ENCODE measurements at regions of chr7 and their contacts with region 1.

Region 1: DNA sequence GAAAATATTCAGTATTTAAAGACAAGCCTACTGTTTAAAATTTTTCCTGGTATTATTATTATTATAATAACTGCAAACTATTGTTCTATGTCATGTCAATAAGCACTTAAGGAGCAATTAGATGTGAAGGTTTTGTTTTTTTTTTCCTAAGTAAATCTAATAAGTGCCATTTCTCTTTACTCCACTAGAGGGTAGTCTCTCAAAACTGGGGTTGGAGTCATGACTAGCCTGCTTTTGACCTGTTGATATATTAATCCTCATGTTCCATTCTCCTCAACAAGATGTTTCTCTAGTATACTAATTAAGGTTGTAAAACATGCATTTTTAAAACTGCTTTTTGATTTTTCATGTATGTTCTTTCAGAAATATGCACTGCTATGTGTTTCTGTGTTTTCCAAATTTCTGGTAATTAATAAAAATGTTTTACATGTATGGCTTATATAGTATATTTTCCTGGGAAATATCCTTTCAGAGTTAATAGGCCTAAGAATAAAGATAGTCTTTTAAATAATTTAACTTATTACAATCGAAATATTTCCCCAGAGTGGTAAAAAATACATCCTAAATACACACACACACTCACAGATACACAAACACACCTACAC is 1.0 kb upstream of the LRRN3 start:
- DNase-seq: no peak
- H3K4me3 Mint-ChIP-seq: no peak overlapping the region
- H3K27ac Mint-ChIP-seq: no peak overlapping the region
- H3K4me1 Mint-ChIP-seq: peaks cover 68% of the 10 kb centered on the region
- H3K27me3 Mint-ChIP-seq: no peaks in the 10 kb centered on the region

Region 2: DNA sequence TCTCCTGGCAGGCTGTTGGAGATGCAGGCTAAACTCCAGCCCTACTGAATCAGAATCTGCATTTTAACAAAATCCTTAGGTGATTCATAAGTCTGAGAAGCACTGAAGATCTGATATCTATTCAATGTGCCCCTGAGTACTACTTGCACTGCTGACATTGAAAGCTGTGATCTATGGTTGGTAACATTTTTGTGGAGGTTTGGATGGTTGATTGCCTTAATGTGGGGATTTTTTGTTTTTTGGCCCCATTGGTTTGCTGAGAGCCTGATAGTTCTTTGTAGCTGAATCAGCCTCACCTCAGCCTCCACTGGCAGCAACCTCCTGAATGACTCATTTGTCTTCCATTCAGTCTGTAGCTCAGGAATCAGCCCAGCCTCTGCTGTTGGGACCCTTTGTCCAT is 13.7 kb before region 1 on chr7:
- CTCF ChIA-PET with region 1: interaction called, 3 read pairs
- intact Hi-C with region 1: loop called (anchors 1 kb)
- DNase-seq: peak; percentile 63
- H3K4me3 Mint-ChIP-seq: no peak overlapping the region
- H3K27ac Mint-ChIP-seq: peak overlapping the region; percentile 20
- H3K4me1 Mint-ChIP-seq: peaks cover 65% of the 10 kb centered on the region
- H3K27me3 Mint-ChIP-seq: no peaks in the 10 kb centered on the region

Region 3: DNA sequence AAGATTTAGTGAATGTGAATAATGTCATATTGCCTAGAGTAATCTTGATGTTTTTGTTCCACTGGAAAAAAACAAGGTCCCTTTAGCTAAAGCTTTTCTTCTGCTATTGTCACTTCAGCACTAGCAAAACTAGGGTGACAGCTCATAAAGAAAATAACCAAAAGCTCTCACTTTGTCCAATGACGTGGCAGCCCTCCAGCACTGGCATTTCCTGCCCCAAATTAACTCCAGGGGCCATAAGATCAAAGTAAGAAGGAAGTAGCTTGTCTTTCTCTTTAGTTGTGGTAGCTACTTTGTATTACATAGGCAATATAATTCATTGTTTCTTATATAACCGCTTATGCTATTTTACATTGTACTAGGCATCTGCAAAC is 48.3 kb after region 1 on chr7:
- CTCF ChIA-PET with region 1: interaction called, 6 read pairs
- intact Hi-C with region 1: loop called (anchors 1 kb)
- DNase-seq: peak; percentile 86
- H3K4me3 Mint-ChIP-seq: peak overlapping the region; percentile 62
- H3K27ac Mint-ChIP-seq: peak overlapping the region; percentile 92
- H3K4me1 Mint-ChIP-seq: peaks cover 32% of the 10 kb centered on the region
- H3K27me3 Mint-ChIP-seq: no peaks in the 10 kb centered on the region

Region 4: DNA sequence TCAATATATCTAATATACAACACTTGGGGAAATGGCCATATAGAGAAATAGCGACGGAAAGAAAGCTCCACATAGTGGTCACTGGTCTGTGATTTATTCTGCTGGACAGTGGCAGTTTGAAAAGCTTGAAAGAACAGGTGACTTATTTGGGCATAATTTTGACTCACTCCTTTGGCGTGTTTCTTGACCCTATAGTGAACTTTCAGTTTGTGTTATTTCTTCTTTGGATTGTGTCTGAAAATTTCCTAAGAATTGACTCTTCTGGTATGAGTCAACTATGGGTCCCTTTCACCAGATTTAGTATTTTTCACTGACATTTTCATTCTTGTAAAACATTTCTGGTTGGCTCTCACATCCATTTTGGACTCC is 498.1 kb after region 1 on chr7:
- CTCF ChIA-PET with region 1: no interaction called
- intact Hi-C with region 1: no loop called
- DNase-seq: no peak
- H3K4me3 Mint-ChIP-seq: no peak overlapping the region
- H3K27ac Mint-ChIP-seq: no peak overlapping the region
- H3K4me1 Mint-ChIP-seq: no peaks in the 10 kb centered on the region
- H3K27me3 Mint-ChIP-seq: peaks cover 7% of the 10 kb centered on the region

Region 5: GRCh38 chr7:111730476-111731300 is 640.8 kb after region 1 on chr7:
- CTCF ChIA-PET with region 1: no interaction called
- intact Hi-C with region 1: loop called (anchors 2 kb)
- DNase-seq: peak; percentile 12
- H3K4me3 Mint-ChIP-seq: no peak overlapping the region
- H3K27ac Mint-ChIP-seq: no peak overlapping the region
- H3K4me1 Mint-ChIP-seq: no peaks in the 10 kb centered on the region
- H3K27me3 Mint-ChIP-seq: peaks cover 4% of the 10 kb centered on the region

Measured in activated naive CD4-positive, alpha-beta T cell treated with anti-CD3 and anti-CD28 coated beads for 36 hours (primary cell).